ENCODE measurements at regions of chr7 and their contacts with region 1.

Region 1: GRCh38 chr7:100632951-100633717 is 8.2 kb downstream of the TFR2 start:
- DNase-seq: peak; percentile 95
- H3K4me3 ChIP-seq: peak overlapping the region; percentile 43 to 59
- H3K27ac ChIP-seq: no peak overlapping the region
- H3K4me1 ChIP-seq: peaks cover 6% of the 10 kb centered on the region in 2 experiments; a peak in 1 of 4 replicates
- H3K27me3 ChIP-seq: no peaks in the 10 kb centered on the region
- CTCF ChIP-seq: peak; percentile 53
- EP300 ChIP-seq: no peak
- RAD21 ChIP-seq: peak; percentile 46

Region 2: GRCh38 chr7:100604028-100604975 is 28.8 kb before region 1 on chr7:
- CTCF ChIA-PET with region 1: interaction called, 11 read pairs
- POLR2A ChIA-PET with region 1: interaction called, 4 read pairs
- DNase-seq: peak; percentile 98
- H3K4me3 ChIP-seq: peak overlapping the region; percentile 67 to 76
- H3K27ac ChIP-seq: peak overlapping the region; percentile 69 to 97
- H3K4me1 ChIP-seq: peaks cover 10 to 25% of the 10 kb centered on the region in 2 experiments; a peak in 3 of 4 replicates
- H3K27me3 ChIP-seq: no peaks in the 10 kb centered on the region
- CTCF ChIP-seq: peak; percentile 59
- EP300 ChIP-seq: peak in 1 of 2 experiments; percentile 39; a peak in 1 of 4 replicates
- RAD21 ChIP-seq: no peak

Region 3: DNA sequence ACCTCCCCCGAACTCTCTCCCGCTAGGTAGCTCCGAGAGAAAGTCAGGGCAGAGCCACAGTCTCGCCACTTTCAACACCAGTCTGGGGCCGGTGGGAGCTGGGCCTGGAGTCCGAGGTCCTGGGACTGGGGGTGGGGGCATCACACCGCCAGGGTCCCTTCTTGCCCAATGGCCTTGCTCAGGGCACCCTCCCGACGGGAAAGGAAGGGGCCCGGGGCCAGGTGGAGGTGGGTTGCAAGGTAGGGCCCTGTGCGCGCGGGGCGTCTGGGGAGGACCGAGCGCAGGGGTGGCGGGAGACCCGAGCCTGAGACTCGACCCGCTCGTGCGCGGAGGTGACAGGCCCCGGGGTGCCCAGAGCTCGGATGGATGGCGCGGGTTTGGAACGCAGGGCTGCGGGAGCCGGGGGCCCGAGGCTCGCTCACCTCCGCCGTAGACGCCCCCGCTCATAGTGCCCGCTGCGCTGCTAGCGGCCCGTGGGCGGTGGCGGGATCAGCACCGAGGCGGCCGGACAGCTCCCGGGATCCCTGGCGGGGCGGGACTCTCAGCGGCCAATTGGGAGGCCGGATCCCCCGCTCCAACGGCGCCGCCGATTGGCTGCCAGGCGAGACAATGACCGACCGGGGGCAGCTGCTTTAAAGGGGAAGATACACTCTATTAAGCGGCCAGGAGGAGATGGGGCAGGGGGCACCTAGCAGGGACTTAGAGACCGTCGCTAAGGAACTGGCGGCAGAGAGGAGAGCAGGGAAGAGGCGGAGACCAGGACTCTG is 23.0 kb after region 1 on chr7 and contains the start of gene ACTL6B:
- CTCF ChIA-PET with region 1: interaction called, 109 read pairs
- POLR2A ChIA-PET with region 1: interaction called, 10 read pairs
- DNase-seq: peak; percentile 100
- H3K4me3 ChIP-seq: peak within 1 kb of the TSS in 1 of 2 experiments; percentile 46; a peak in 2 of 4 replicates
- H3K27ac ChIP-seq: peak within 1 kb of the TSS in 1 of 2 experiments; percentile 40; a peak in 1 of 4 replicates
- H3K4me1 ChIP-seq: peaks cover 0 to 6% of the 10 kb centered on the region in 2 experiments; a peak in 1 of 4 replicates
- H3K27me3 ChIP-seq: peaks cover 17% of the 10 kb centered on the region; the same call in 1 of the 2 replicates
- CTCF ChIP-seq: no peak
- EP300 ChIP-seq: no peak
- RAD21 ChIP-seq: no peak
- polyA plus RNA-seq, gene ACTL6B: 0.67 and 0.93 TPM in 2 replicates

Region 4: DNA sequence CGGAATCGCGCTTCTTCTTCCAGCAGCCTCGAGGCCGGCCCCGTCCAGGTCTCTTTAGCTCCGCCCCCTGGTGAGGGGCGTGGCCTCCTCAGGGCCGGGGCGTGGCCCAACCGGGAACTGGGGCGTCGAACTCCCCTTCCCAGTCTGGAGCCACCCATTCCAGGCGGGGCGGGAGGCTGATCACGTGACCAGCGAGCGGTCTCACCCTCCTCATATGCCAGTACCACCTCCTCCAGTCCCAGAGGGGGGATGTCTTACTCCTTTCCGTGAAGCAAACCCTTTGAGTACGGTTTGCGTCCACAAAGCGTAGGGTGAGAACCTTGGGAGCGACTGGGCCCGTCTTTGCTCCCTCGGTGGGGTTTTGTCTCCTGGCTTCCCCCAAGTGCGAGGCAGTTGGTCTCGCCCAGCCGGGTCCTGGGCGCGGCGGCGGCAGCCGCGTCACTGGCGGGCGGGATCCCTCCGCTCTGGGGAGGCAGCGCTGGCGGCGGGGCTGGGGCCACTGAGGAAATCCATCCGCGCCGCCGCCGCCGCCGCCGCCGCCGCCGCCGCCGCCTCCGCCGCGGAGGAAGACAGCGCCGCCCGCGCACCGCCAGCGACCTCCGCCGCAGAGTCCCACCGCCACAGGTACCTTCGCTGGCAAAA is 40.3 kb after region 1 on chr7 and contains the start of gene GNB2:
- CTCF ChIA-PET with region 1: interaction called, 12 read pairs
- POLR2A ChIA-PET with region 1: interaction called, 5 read pairs
- DNase-seq: peak; percentile 99
- H3K4me3 ChIP-seq: peak within 1 kb of the TSS; percentile 83 to 98
- H3K27ac ChIP-seq: peak within 1 kb of the TSS; percentile 94 to 99
- H3K4me1 ChIP-seq: peaks cover 0 to 19% of the 10 kb centered on the region in 2 experiments; a peak in 1 of 4 replicates
- H3K27me3 ChIP-seq: no peaks in the 10 kb centered on the region
- CTCF ChIP-seq: no peak
- EP300 ChIP-seq: peak in 1 of 2 experiments; percentile 84; a peak in 2 of 4 replicates
- RAD21 ChIP-seq: no peak
- polyA plus RNA-seq, gene GNB2: 276 and 398 TPM in 2 replicates

Region 5: GRCh38 chr7:100680167-100680575 is 47.0 kb after region 1 on chr7:
- CTCF ChIA-PET with region 1: interaction called, 14 read pairs
- POLR2A ChIA-PET with region 1: interaction called, 5 read pairs
- DNase-seq: peak; percentile 44
- H3K4me3 ChIP-seq: no peak overlapping the region
- H3K27ac ChIP-seq: no peak overlapping the region; a peak in 1 of 4 replicates
- H3K4me1 ChIP-seq: peaks cover 0 to 35% of the 10 kb centered on the region in 2 experiments; a peak in 1 of 4 replicates
- H3K27me3 ChIP-seq: no peaks in the 10 kb centered on the region
- CTCF ChIP-seq: no peak
- EP300 ChIP-seq: no peak
- RAD21 ChIP-seq: no peak